CD4-positive, alpha-beta T cell (primary cell): ENCODE measurements at regions of chr10 and their contacts with region 1.

Region 1: DNA sequence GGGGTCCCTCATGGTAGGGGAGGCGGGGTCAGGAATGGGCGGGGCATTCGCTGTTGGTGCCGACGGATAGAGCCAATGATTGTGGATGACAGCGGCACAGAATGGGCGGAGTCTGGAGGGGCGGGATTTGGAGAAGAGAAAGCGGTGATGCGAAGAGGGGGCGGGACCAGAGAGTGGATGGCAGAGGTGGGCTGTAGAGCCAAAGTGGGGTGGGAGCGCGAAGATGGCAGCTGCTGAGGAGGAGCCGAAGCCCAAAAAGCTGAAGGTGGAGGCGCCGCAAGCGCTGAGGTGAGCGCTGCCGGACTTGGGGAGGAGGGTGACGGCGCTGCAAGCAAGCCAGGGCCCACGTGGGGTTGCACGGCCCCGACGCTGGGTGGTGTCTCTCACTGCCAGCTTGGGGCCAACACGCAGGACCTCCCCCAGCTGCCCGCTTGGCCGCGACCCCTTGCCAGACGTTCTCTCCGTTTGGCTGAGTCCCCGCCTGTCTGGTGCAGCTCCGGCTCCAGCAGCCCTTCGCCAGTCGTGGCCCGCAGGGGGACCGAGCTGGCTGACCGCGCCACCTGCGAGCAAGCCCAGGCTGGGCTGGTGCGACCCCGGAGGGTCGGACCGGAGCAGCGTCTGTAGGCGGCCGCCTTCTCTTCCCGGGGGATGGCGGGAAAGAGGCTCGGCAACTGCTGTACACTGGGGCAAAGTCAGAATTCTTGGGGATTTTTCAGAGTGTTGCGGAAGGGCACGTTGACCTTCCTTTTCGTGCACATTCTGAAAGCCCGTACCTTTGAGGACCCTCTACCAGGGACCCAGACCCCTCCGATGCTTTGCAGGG is at the start of gene ADK:
- DNase-seq: peak; percentile 98 to 100 (median 100)
- ATAC-seq: peak; percentile 95
- H3K4me3 ChIP-seq: peak within 1 kb of the TSS; percentile 68
- H3K4me3 Mint-ChIP-seq: no peak within 1 kb of the TSS
- H3K27ac ChIP-seq: peak within 1 kb of the TSS; percentile 77 to 95
- H3K27ac Mint-ChIP-seq: peak within 1 kb of the TSS; percentile 70
- H3K4me1 ChIP-seq: peaks cover 26% of the 10 kb centered on the region
- H3K4me1 Mint-ChIP-seq: peaks cover 44% of the 10 kb centered on the region
- H3K27me3 ChIP-seq: no peaks in the 10 kb centered on the region
- H3K27me3 Mint-ChIP-seq: no peaks in the 10 kb centered on the region
- CTCF ChIP-seq: peak; percentile 42
- total RNA-seq, gene ADK: 15.3 to 17.6 TPM

Region 2: DNA sequence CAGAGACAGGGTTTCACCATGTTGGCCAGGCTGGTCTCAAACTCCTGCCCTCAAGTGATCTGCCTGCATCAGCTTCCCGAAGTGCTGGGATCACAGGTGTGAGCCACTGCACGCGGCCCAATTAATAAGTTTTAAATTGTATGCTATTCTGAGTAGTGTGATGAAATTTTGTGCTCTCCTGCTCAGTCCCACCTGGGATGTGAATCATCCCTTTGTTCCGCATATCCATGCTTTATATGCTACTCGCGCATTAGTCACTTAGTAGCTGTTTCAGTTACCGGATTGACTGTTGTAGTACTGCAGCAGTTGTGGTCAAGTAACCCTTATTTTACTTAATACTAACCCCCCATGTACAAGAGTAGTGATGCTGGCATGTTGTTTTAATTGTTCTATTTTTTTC is 1305.0 kb before region 1 on chr10:
- CTCF ChIA-PET with region 1: no interaction called
- POLR2A ChIA-PET with region 1: no interaction called
- intact Hi-C with region 1: no loop called
- DNase-seq: no peak
- ATAC-seq: no peak
- H3K4me3 ChIP-seq: no peak overlapping the region
- H3K4me3 Mint-ChIP-seq: no peak overlapping the region
- H3K27ac ChIP-seq: no peak overlapping the region
- H3K27ac Mint-ChIP-seq: no peak overlapping the region
- H3K4me1 ChIP-seq: no peaks in the 10 kb centered on the region
- H3K4me1 Mint-ChIP-seq: no peaks in the 10 kb centered on the region
- H3K27me3 ChIP-seq: no peaks in the 10 kb centered on the region
- H3K27me3 Mint-ChIP-seq: no peaks in the 10 kb centered on the region
- CTCF ChIP-seq: no peak

Region 3: DNA sequence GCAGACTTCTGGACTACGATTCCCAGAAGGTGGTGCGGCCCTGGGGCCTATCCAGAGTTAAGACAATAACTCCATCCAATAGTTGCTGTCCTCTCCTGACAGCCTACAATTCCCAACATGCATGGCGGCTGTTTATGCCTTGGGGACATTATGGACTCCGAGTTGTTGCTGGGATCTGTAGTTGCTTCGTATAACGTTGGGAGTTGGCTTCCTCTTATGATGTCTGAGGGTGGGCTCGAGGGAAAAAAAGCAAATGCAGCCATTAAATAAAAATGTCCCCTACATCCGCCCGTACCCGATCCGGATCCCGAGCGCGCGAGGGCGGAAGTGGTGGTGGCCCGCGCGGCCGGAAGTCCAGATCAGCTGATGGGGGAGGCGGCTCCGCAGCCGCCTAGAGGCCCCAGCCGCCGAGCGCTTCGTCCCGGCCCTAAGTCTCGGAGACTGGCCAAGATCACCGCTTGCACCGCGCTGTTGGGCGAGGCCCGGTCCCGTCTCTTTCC is 366.0 kb before region 1 on chr10 and contains the start of gene ZSWIM8:
- CTCF ChIA-PET with region 1: no interaction called
- POLR2A ChIA-PET with region 1: interaction called, 4 read pairs
- intact Hi-C with region 1: loop called in 1 of 2 experiments (anchors 10 kb)
- DNase-seq: peak; percentile 69 to 95 (median 82)
- ATAC-seq: peak; percentile 83
- H3K4me3 ChIP-seq: peak within 1 kb of the TSS; percentile 94
- H3K4me3 Mint-ChIP-seq: peak within 1 kb of the TSS; percentile 98
- H3K27ac ChIP-seq: peak within 1 kb of the TSS; percentile 80
- H3K27ac Mint-ChIP-seq: peak within 1 kb of the TSS; percentile 96
- H3K4me1 ChIP-seq: peaks cover 38% of the 10 kb centered on the region
- H3K4me1 Mint-ChIP-seq: peaks cover 61% of the 10 kb centered on the region
- H3K27me3 ChIP-seq: no peaks in the 10 kb centered on the region
- H3K27me3 Mint-ChIP-seq: no peaks in the 10 kb centered on the region
- CTCF ChIP-seq: no peak
- total RNA-seq, gene ZSWIM8: 66.4 to 70.7 TPM

Region 4: GRCh38 chr10:74096777-74097176 is 54.5 kb before region 1 on chr10:
- CTCF ChIA-PET with region 1: no interaction called
- POLR2A ChIA-PET with region 1: no interaction called
- intact Hi-C with region 1: no loop called
- DNase-seq: no peak
- ATAC-seq: no peak
- H3K4me3 ChIP-seq: no peak overlapping the region
- H3K4me3 Mint-ChIP-seq: no peak overlapping the region
- H3K27ac ChIP-seq: no peak overlapping the region
- H3K27ac Mint-ChIP-seq: no peak overlapping the region
- H3K4me1 ChIP-seq: no peaks in the 10 kb centered on the region
- H3K4me1 Mint-ChIP-seq: no peaks in the 10 kb centered on the region
- H3K27me3 ChIP-seq: no peaks in the 10 kb centered on the region
- H3K27me3 Mint-ChIP-seq: no peaks in the 10 kb centered on the region
- CTCF ChIP-seq: no peak

Region 5: GRCh38 chr10:74165530-74165901 is 14.2 kb after region 1 on chr10:
- CTCF ChIA-PET with region 1: interaction called, 3 read pairs
- POLR2A ChIA-PET with region 1: interaction called, 18 read pairs
- intact Hi-C with region 1: no loop called
- DNase-seq: no peak
- ATAC-seq: no peak
- H3K4me3 ChIP-seq: no peak overlapping the region
- H3K4me3 Mint-ChIP-seq: no peak overlapping the region
- H3K27ac ChIP-seq: no peak overlapping the region
- H3K27ac Mint-ChIP-seq: no peak overlapping the region
- H3K4me1 ChIP-seq: peaks cover 4% of the 10 kb centered on the region
- H3K4me1 Mint-ChIP-seq: peaks cover 26% of the 10 kb centered on the region
- H3K27me3 ChIP-seq: no peaks in the 10 kb centered on the region
- H3K27me3 Mint-ChIP-seq: no peaks in the 10 kb centered on the region
- CTCF ChIP-seq: no peak

Region 6: DNA sequence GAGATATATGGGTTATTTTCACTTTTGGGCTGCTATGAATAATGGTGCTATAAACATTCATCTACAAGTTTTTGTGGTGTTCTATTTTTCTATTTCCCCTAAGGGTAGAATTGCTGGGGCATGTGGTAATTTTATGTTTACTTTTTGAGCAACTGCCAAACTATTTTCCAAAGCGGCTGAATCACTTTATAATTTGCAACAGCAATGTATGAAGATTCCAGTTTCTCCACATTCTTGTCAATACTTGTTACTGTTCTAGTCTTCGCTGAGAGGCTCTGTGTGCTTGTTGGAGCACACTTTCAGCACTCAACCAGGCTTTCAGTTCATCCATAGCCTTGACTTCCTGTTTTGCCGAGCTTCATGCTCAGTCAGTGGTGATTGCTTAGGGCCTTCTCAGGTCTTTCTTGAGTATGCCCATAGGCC is 38.7 kb after region 1 on chr10:
- CTCF ChIA-PET with region 1: no interaction called
- POLR2A ChIA-PET with region 1: interaction called, 21 read pairs
- intact Hi-C with region 1: loop called in 1 of 2 experiments (anchors 1 kb)
- DNase-seq: peak in 10 of 14 experiments; percentile 7 to 64 (median 14)
- ATAC-seq: peak; percentile 52
- H3K4me3 ChIP-seq: peak overlapping the region; percentile 19
- H3K4me3 Mint-ChIP-seq: peak overlapping the region; percentile 32
- H3K27ac ChIP-seq: peak overlapping the region; percentile 25 to 81
- H3K27ac Mint-ChIP-seq: peak overlapping the region; percentile 88
- H3K4me1 ChIP-seq: peaks cover 20% of the 10 kb centered on the region
- H3K4me1 Mint-ChIP-seq: peaks cover 70% of the 10 kb centered on the region
- H3K27me3 ChIP-seq: no peaks in the 10 kb centered on the region
- H3K27me3 Mint-ChIP-seq: no peaks in the 10 kb centered on the region
- CTCF ChIP-seq: no peak

Region 7: GRCh38 chr10:74227697-74228424 is 76.6 kb after region 1 on chr10:
- CTCF ChIA-PET with region 1: interaction called, 6 read pairs
- POLR2A ChIA-PET with region 1: interaction called, 17 read pairs
- intact Hi-C with region 1: loop called (anchors 5 kb)
- DNase-seq: peak in 6 of 14 experiments; percentile 10 to 63 (median 45)
- ATAC-seq: peak; percentile 82
- H3K4me3 ChIP-seq: no peak overlapping the region
- H3K4me3 Mint-ChIP-seq: peak overlapping the region; percentile 71
- H3K27ac ChIP-seq: peak overlapping the region in 1 of 2 donors; percentile 71
- H3K27ac Mint-ChIP-seq: peak overlapping the region; percentile 80
- H3K4me1 ChIP-seq: peaks cover 12% of the 10 kb centered on the region
- H3K4me1 Mint-ChIP-seq: peaks cover 44% of the 10 kb centered on the region
- H3K27me3 ChIP-seq: no peaks in the 10 kb centered on the region
- H3K27me3 Mint-ChIP-seq: no peaks in the 10 kb centered on the region
- CTCF ChIP-seq: no peak

Region 8: DNA sequence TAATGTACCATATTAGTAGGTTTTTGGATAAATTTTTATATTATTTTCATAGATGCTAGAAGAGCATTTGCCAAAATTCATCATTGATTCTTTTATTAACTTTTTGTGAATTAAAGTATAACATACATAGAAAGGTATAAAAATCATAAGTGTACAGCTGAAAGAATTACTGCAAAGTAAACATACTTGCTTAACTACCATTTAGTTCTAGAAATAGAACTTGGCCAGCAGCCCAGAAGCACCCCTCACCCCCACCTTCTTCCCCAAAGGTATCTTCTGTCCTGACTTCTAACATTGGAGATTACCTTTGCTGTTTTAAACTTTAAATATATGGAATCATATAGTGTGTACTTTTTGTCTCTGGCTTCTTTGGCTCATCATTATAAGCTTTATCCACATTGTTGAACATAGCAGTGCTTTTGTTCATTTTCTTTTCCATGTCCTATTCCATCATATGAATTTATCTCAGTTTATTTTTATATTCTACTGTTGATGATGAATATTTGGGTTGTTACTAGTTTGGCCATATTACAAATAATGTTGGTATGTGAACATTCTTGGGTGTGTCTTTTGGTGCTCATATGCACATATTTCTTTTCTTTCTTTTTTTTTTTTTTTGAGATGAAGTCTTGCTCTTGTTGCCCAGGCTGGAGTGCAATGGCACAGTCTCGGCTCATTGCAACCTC is 142.6 kb after region 1 on chr10:
- CTCF ChIA-PET with region 1: no interaction called
- POLR2A ChIA-PET with region 1: no interaction called
- intact Hi-C with region 1: no loop called
- DNase-seq: no peak
- ATAC-seq: no peak
- H3K4me3 ChIP-seq: no peak overlapping the region
- H3K4me3 Mint-ChIP-seq: no peak overlapping the region
- H3K27ac ChIP-seq: no peak overlapping the region
- H3K27ac Mint-ChIP-seq: no peak overlapping the region
- H3K4me1 ChIP-seq: no peaks in the 10 kb centered on the region
- H3K4me1 Mint-ChIP-seq: peaks cover 23% of the 10 kb centered on the region
- H3K27me3 ChIP-seq: no peaks in the 10 kb centered on the region
- H3K27me3 Mint-ChIP-seq: no peaks in the 10 kb centered on the region
- CTCF ChIP-seq: no peak

Region 9: DNA sequence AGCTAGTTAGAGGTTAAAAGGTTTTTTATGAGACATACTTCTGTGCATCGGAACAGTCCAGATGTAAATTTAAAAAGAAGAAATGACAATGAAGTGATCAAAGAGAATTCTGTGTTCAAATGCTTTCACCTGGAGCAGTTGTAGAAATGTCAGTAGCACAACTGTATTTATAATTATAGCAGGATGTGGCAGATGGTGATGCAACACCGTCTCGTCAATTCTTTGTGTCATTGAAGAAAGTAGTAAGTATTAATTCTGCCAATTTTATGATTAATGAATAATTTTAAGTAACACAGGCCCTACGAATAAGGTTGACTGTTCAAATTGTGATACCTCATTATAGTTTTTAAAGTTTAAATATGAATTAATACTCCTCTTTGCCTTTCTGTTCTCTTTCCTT is 170.9 kb after region 1 on chr10:
- CTCF ChIA-PET with region 1: no interaction called
- POLR2A ChIA-PET with region 1: no interaction called
- intact Hi-C with region 1: no loop called
- DNase-seq: no peak
- ATAC-seq: no peak
- H3K4me3 ChIP-seq: no peak overlapping the region
- H3K4me3 Mint-ChIP-seq: no peak overlapping the region
- H3K27ac ChIP-seq: no peak overlapping the region
- H3K27ac Mint-ChIP-seq: no peak overlapping the region
- H3K4me1 ChIP-seq: no peaks in the 10 kb centered on the region
- H3K4me1 Mint-ChIP-seq: peaks cover 5% of the 10 kb centered on the region
- H3K27me3 ChIP-seq: no peaks in the 10 kb centered on the region
- H3K27me3 Mint-ChIP-seq: no peaks in the 10 kb centered on the region
- CTCF ChIP-seq: no peak

Region 10: DNA sequence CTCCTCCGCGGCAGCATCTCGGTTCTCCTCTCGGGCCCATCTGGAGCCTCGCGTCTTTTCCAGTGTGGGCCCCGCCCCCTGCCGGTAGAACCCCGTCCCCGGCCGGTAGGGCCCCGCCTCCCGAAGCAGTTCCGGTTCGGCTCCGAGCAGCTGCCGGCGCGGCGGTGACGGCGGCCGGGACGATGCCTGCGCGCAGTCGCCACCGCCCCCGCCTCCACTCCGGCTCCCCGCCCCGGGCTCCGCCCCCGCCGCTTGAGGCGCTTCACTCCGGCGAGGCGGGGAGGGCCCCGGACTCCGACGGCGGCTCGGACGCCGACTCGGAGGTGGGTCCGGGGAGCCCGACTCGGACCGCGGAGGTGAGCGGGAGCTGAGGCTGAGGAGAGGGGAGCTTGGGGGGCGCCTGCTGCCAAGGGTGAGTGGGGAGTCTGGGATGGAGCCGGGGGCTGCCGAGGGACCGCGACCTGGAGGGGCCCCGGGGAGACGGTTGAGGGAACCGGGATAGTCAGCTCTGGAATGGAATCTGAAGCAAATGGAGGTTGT is 960.2 kb after region 1 on chr10 and contains the start of gene SAMD8:
- CTCF ChIA-PET with region 1: no interaction called
- POLR2A ChIA-PET with region 1: interaction called, 6 read pairs
- intact Hi-C with region 1: loop called in 1 of 2 experiments (anchors 2 kb)
- DNase-seq: peak; percentile 90 to 99 (median 94)
- ATAC-seq: peak; percentile 80
- H3K4me3 ChIP-seq: peak within 1 kb of the TSS; percentile 97
- H3K4me3 Mint-ChIP-seq: peak within 1 kb of the TSS; percentile 88
- H3K27ac ChIP-seq: peak within 1 kb of the TSS; percentile 92 to 95
- H3K27ac Mint-ChIP-seq: peak within 1 kb of the TSS; percentile 90
- H3K4me1 ChIP-seq: peaks cover 26% of the 10 kb centered on the region
- H3K4me1 Mint-ChIP-seq: peaks cover 62% of the 10 kb centered on the region
- H3K27me3 ChIP-seq: no peaks in the 10 kb centered on the region
- H3K27me3 Mint-ChIP-seq: no peaks in the 10 kb centered on the region
- CTCF ChIP-seq: no peak
- total RNA-seq, gene SAMD8: 34.1 to 37.4 TPM

Region 11: DNA sequence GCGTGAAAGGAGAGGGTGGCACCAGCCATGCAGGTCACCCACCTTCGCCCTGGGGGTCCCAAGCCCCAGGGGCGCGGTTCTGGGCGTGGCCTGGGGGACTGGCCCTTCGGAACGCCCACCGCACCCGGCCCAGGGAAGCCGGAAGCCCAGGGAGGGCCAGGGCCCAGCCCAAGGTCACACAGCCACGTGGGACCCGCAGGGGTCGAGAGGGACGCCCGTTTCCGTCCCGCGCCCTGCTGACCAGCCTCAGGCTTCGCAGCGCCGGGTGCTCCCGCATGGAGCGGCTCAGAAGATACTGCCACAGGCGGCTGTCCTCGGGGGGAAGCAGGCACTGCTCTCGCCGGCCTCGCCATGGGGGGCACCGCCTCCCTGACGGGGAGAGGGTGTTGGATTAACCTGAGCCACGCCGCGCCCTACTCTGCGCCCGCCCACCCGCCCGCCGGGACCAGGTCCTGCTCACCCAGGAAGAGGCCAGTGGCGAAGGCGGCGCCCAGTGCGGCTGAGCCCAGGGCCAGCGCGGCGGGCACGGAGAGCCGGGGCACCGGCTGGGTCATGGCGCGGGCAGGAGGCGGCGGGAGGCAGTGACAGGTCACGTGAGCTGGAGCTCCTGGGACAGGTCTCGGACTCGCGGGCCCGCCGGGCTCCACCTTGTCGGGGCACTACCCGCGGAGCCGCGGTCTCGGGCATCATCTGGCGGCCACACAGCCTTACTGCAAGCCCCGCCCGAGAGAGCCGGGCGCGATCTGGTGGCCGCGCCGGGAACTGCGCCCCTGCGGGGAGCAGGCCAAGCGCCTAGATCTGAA is 1084.3 kb after region 1 on chr10 and contains the start of gene COMTD1:
- CTCF ChIA-PET with region 1: interaction called, 3 read pairs
- POLR2A ChIA-PET with region 1: no interaction called
- intact Hi-C with region 1: loop called in 1 of 2 experiments (anchors 5 kb)
- DNase-seq: peak; percentile 87 to 96 (median 92)
- ATAC-seq: peak; percentile 64
- H3K4me3 ChIP-seq: peak within 1 kb of the TSS; percentile 80
- H3K4me3 Mint-ChIP-seq: peak within 1 kb of the TSS; percentile 88
- H3K27ac ChIP-seq: peak within 1 kb of the TSS; percentile 47 to 66
- H3K27ac Mint-ChIP-seq: peak within 1 kb of the TSS; percentile 90
- H3K4me1 ChIP-seq: peaks cover 28% of the 10 kb centered on the region
- H3K4me1 Mint-ChIP-seq: peaks cover 29% of the 10 kb centered on the region
- H3K27me3 ChIP-seq: no peaks in the 10 kb centered on the region
- H3K27me3 Mint-ChIP-seq: no peaks in the 10 kb centered on the region
- CTCF ChIP-seq: peak; percentile 100
- total RNA-seq, gene COMTD1: 9.5 to 10.5 TPM